IMR-90 (cell line): ENCODE measurements at regions of chr1 and their contacts with region 1.

Region 1: DNA sequence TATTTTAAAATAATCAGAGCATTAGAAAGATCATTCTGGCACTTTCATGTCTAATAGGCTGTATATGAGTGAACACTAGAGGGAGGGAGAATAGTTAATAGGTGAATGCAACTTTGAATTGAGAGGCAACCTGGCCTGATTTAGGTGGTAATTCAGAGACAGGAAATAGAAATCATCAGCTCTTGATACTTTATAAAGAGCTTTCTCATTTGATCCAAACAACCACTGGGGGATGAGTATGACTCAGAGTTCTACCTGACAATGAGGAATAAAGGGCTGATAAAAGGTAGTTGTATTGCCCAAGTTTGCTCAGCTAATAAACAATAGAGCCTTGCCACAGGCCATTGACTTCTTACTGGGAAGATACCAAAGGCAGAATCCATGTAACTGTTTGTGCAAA is 5.2 kb upstream of the FAM89A start:
- DNase-seq: no peak
- ATAC-seq: no peak
- H3K4me3 ChIP-seq: no peak overlapping the region
- H3K27ac ChIP-seq: no peak overlapping the region
- H3K4me1 ChIP-seq: peaks cover 5% of the 10 kb centered on the region; the same call in 1 of the 2 replicates
- H3K27me3 ChIP-seq: peaks cover 27% of the 10 kb centered on the region
- CTCF ChIP-seq: no peak
- POLR2A ChIP-seq: no peak
- RAD21 ChIP-seq: no peak

Region 2: DNA sequence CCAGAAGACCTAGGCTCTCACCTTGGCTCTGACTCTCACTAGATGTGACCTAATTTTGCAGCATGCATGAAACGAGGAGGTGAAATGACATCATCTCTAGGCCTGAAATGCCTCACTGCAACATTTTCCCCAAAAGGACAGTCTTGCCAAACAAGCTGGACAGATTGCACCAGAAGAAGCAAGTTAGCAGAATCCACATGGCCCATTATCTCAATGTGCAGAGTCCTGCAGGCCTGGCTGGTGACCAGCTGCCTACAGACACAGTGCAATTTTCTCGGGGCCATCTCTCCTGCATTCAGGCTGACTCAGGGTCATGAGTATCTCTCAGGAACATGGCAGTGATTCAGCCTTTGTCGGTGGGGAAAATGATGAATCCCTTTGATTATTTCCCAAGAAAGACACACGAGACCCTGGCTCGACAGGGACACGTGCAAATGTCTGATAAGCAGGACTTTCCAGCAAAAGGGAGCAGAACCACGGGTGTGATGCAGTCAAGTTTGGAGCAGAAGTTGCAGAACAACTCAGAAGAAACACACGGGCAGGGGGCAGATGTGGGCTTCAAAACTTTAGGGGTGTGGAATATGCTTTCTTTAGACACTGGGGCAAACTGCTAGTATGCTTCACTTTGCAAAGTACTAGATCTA is 155.2 kb after region 1 on chr1:
- CTCF ChIA-PET with region 1: no interaction called
- POLR2A ChIA-PET with region 1: no interaction called
- dilution Hi-C with region 1: no loop called
- in situ Hi-C with region 1: no loop called
- intact Hi-C with region 1: loop called (anchors 5 kb)
- DNase-seq: peak; percentile 32
- ATAC-seq: peak; percentile 27; the same call in 1 of the 2 replicates
- H3K4me3 ChIP-seq: no peak overlapping the region
- H3K27ac ChIP-seq: no peak overlapping the region
- H3K4me1 ChIP-seq: no peaks in the 10 kb centered on the region
- H3K27me3 ChIP-seq: peaks cover 40% of the 10 kb centered on the region
- CTCF ChIP-seq: no peak
- POLR2A ChIP-seq: no peak
- RAD21 ChIP-seq: no peak